CD8-positive, alpha-beta T cell (primary cell): ENCODE measurements at regions of chr1 and their contacts with region 1.

Region 1: DNA sequence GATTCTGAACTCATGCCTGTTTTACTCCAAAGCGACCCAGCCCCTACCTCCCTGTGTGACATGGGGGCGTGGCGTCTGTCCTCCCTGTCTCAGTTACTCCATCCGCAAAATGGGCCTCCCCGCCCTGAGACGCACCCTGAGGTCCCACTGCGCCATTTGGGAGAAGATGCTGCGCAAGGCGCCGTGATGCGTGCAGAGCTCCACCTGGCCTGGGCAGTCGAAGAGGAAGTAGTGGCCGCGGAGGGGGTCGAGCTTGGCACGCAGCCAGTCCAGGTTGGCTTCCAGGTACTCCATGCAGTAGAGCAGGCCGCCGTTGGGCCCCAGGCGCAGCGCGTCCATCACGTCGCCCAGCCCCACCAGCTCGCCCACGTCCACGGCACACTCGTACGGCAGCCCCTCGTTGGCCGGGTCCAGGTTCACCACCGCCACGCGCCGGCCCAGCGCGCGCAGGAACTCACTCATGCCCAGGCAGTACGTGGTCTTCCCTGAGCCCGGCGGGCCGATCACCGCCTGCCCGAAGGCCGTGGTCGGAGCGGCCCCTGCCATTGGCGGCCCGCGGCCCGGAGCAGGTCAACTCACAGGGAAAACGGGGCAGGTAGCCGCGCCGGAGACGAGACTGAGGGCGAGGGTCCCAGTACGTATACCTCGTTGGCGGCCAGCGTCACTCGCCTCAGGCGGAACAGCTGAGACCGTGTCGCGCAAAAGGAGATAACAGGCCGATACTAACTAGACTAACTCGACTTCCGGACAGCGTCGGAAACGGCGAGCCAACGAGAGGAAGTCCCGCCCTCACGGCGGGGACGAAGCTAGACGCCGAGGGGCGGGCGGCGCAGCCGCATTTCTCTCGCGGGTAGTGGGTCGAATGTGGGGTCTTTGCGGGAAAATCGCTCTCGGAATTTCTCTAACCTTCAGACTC is at the start of gene GPN2:
- DNase-seq: peak; percentile 44 to 90 (median 74)
- ATAC-seq: peak; percentile 92
- H3K4me3 ChIP-seq: peak within 1 kb of the TSS; percentile 57 to 94
- H3K4me3 Mint-ChIP-seq: peak within 1 kb of the TSS; percentile 94
- H3K27ac ChIP-seq: peak within 1 kb of the TSS; percentile 80 to 86
- H3K27ac Mint-ChIP-seq: peak within 1 kb of the TSS; percentile 96
- H3K4me1 ChIP-seq: peaks cover 18% of the 10 kb centered on the region
- H3K4me1 Mint-ChIP-seq: peaks cover 42% of the 10 kb centered on the region
- H3K27me3 ChIP-seq: no peaks in the 10 kb centered on the region
- H3K27me3 Mint-ChIP-seq: no peaks in the 10 kb centered on the region
- CTCF ChIP-seq: no peak
- total RNA-seq, gene GPN2: 35.1 to 37.4 TPM

Region 2: DNA sequence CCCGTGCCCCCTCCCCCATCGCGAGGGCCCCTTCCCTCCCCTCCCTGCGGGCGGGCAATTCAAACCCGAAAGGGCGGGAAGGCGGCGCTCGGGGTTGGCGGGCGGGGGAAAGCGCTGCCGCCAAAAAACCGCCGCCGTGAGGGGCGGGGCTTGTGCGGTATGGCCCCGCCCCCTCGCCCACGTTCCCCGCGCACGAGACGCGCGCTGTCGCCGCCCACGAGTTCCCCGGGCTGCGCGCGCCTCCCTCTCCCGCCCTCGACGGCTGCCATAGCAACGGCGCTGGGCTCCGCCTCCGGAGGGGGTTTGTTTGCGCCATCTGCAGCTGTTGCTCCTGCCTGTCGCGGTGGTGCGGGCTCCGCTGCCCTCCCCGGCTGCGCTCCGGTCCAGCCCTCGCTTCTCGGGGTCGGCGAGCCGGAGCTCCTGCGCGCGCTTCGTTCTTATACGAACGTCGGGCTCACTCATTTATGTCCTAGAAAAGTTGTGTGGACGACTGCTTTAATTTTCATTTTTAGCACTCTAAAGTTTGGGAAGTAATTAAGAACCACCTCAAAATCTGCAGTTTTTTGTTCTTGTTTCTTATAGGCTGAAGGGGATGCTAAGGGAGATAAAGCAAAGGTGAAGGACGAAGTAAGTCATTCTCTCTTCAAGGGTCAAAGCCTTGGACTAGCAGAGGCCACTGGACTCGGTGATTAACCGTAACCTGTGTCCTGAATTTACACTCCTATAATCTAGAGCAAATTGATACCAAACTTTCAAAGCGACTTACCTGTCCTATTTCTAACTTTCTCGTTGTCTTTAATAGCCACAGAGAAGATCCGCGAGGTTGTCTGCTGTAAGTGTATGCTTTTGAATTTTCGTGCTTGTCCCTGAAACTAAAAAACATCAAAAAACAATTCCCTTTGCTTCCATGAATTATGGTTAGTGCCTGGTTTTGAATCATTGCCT is 416.6 kb before region 1 on chr1:
- CTCF ChIA-PET with region 1: no interaction called
- POLR2A ChIA-PET with region 1: no interaction called
- intact Hi-C with region 1: loop called in 1 of 2 experiments (anchors 10 kb)
- DNase-seq: peak; percentile 94 to 99 (median 98)
- ATAC-seq: peak; percentile 86
- H3K4me3 ChIP-seq: peak overlapping the region; percentile 48 to 72
- H3K4me3 Mint-ChIP-seq: peak overlapping the region; percentile 85
- H3K27ac ChIP-seq: peak overlapping the region; percentile 93 to 94
- H3K27ac Mint-ChIP-seq: peak overlapping the region; percentile 78
- H3K4me1 ChIP-seq: peaks cover 32% of the 10 kb centered on the region
- H3K4me1 Mint-ChIP-seq: peaks cover 51% of the 10 kb centered on the region
- H3K27me3 ChIP-seq: no peaks in the 10 kb centered on the region
- H3K27me3 Mint-ChIP-seq: no peaks in the 10 kb centered on the region
- CTCF ChIP-seq: no peak

Region 3: DNA sequence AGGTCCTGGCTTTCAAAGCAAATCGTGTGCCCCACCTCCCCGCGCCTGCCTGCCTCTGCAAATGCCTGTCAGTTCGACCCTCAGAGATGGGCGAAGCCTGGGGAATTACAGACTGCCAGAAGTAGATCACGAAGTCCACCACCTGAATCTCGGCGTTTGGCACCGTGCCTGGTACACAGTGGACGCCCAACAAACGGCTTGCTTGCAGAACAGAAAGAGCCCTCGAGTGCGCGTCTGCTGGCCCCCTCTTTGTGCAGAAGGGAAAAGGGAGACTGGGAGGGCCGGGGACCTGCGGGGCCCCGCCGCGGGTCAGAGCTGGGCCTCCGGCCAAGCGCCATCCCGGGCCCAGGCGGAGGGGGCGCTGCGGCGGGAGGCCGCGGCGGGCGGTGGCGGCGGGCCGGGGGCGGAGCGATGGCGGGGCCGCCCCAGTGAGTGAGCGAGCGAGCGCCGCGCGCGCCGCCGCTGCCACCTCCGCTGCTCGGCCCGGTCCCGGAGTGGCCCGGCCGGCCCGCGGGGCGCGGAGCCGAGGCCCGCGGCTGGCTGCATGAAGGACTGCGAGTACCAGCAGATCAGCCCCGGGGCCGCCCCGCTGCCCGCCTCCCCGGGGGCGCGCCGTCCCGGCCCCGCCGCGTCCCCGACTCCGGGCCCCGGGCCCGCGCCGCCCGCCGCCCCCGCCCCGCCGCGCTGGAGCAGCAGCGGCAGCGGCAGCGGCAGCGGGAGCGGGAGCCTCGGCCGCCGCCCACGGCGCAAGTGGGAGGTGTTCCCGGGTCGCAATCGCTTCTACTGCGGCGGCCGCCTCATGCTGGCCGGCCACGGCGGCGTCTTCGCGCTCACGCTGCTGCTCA is 63.3 kb before region 1 on chr1 and contains the start of gene ZDHHC18:
- CTCF ChIA-PET with region 1: no interaction called
- POLR2A ChIA-PET with region 1: interaction called, 4 read pairs
- intact Hi-C with region 1: loop called (anchors 5 to 10 kb)
- DNase-seq: peak; percentile 48 to 86 (median 69)
- ATAC-seq: peak; percentile 89
- H3K4me3 ChIP-seq: peak within 1 kb of the TSS; percentile 68 to 91
- H3K4me3 Mint-ChIP-seq: peak within 1 kb of the TSS; percentile 94
- H3K27ac ChIP-seq: peak within 1 kb of the TSS; percentile 64 to 91
- H3K27ac Mint-ChIP-seq: peak within 1 kb of the TSS; percentile 96
- H3K4me1 ChIP-seq: peaks cover 50% of the 10 kb centered on the region
- H3K4me1 Mint-ChIP-seq: peaks cover 63% of the 10 kb centered on the region
- H3K27me3 ChIP-seq: no peaks in the 10 kb centered on the region
- H3K27me3 Mint-ChIP-seq: no peaks in the 10 kb centered on the region
- CTCF ChIP-seq: peak; percentile 50
- total RNA-seq, gene ZDHHC18: 55.2 to 55.4 TPM

Region 4: GRCh38 chr1:26833432-26834405 is 56.1 kb before region 1 on chr1:
- CTCF ChIA-PET with region 1: interaction called, 3 read pairs
- POLR2A ChIA-PET with region 1: interaction called, 6 read pairs
- intact Hi-C with region 1: loop called (anchors 5 to 10 kb)
- DNase-seq: peak; percentile 74 to 99 (median 89)
- ATAC-seq: peak; percentile 94
- H3K4me3 ChIP-seq: peak overlapping the region; percentile 27 to 31
- H3K4me3 Mint-ChIP-seq: peak overlapping the region; percentile 73
- H3K27ac ChIP-seq: peak overlapping the region; percentile 88 to 98
- H3K27ac Mint-ChIP-seq: peak overlapping the region; percentile 100
- H3K4me1 ChIP-seq: peaks cover 51% of the 10 kb centered on the region
- H3K4me1 Mint-ChIP-seq: peaks cover 74% of the 10 kb centered on the region
- H3K27me3 ChIP-seq: no peaks in the 10 kb centered on the region
- H3K27me3 Mint-ChIP-seq: no peaks in the 10 kb centered on the region
- CTCF ChIP-seq: peak; percentile 53

Region 5: GRCh38 chr1:26900001-26900814 is 10.4 kb after region 1 on chr1 and contains the start of gene GPATCH3:
- CTCF ChIA-PET with region 1: interaction called, 5 read pairs
- POLR2A ChIA-PET with region 1: interaction called, 44 read pairs
- intact Hi-C with region 1: loop called (anchors 1 kb)
- DNase-seq: peak; percentile 78 to 94 (median 88)
- ATAC-seq: peak; percentile 91
- H3K4me3 ChIP-seq: peak within 1 kb of the TSS; percentile 65 to 75
- H3K4me3 Mint-ChIP-seq: peak within 1 kb of the TSS; percentile 89
- H3K27ac ChIP-seq: peak within 1 kb of the TSS; percentile 70 to 85
- H3K27ac Mint-ChIP-seq: peak within 1 kb of the TSS; percentile 95
- H3K4me1 ChIP-seq: peaks cover 18% of the 10 kb centered on the region
- H3K4me1 Mint-ChIP-seq: peaks cover 27% of the 10 kb centered on the region
- H3K27me3 ChIP-seq: peaks cover 0 to 2% of the 10 kb centered on the region in 2 experiments
- H3K27me3 Mint-ChIP-seq: no peaks in the 10 kb centered on the region
- CTCF ChIP-seq: no peak
- total RNA-seq, gene GPATCH3: 47.8 to 47.9 TPM

Region 6: DNA sequence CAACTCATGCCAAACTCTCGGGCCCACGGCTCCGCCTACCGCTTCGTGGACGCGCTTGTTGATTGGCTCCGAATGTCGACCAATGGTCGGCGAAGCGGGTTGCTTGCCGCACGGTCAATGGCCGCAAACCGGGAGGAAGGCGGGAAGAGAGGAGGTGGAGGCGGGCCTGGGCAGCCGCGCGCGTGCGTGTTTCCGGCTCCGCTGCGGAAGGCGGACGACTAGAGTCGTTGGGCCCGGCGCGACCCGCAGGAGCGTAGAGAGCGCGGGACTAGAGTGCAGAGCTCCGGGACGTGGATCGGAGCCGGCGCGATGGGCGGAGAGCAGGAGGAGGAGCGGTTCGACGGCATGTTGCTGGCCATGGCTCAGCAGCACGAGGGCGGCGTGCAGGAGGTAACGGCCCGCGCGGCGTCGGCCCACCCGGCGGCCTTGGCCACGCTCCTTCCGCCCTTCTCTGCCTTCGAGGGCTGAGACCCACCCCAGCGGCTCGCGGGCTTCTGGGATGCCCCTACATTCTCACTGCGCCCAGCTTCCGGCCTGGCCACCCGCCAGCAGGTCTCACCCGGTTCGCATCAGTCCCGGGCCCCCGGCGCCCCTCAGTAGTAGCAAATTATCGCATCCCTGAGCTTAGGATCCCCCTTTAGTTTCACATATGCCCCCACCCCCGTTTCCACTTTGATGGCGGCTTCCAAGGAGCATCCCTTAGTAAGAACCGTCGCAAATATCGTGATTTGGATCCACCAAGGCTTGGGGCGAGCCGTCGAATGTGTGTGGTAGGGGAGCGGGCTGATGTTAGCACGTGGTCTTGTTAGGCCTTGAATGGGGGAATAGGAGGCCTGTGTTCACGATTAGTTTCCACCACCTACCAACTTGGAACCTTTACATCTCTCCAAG is 32.0 kb after region 1 on chr1 and contains the start of gene NUDC:
- CTCF ChIA-PET with region 1: no interaction called
- POLR2A ChIA-PET with region 1: interaction called, 10 read pairs
- intact Hi-C with region 1: loop called (anchors 1 to 2 kb)
- DNase-seq: peak; percentile 91 to 98 (median 94)
- ATAC-seq: peak; percentile 92
- H3K4me3 ChIP-seq: peak within 1 kb of the TSS; percentile 84 to 95
- H3K4me3 Mint-ChIP-seq: peak within 1 kb of the TSS; percentile 95
- H3K27ac ChIP-seq: peak within 1 kb of the TSS; percentile 87 to 90
- H3K27ac Mint-ChIP-seq: peak within 1 kb of the TSS; percentile 99
- H3K4me1 ChIP-seq: peaks cover 23% of the 10 kb centered on the region
- H3K4me1 Mint-ChIP-seq: peaks cover 34% of the 10 kb centered on the region
- H3K27me3 ChIP-seq: no peaks in the 10 kb centered on the region
- H3K27me3 Mint-ChIP-seq: no peaks in the 10 kb centered on the region
- CTCF ChIP-seq: no peak
- total RNA-seq, gene NUDC: 51.9 to 55.0 TPM

Region 7: DNA sequence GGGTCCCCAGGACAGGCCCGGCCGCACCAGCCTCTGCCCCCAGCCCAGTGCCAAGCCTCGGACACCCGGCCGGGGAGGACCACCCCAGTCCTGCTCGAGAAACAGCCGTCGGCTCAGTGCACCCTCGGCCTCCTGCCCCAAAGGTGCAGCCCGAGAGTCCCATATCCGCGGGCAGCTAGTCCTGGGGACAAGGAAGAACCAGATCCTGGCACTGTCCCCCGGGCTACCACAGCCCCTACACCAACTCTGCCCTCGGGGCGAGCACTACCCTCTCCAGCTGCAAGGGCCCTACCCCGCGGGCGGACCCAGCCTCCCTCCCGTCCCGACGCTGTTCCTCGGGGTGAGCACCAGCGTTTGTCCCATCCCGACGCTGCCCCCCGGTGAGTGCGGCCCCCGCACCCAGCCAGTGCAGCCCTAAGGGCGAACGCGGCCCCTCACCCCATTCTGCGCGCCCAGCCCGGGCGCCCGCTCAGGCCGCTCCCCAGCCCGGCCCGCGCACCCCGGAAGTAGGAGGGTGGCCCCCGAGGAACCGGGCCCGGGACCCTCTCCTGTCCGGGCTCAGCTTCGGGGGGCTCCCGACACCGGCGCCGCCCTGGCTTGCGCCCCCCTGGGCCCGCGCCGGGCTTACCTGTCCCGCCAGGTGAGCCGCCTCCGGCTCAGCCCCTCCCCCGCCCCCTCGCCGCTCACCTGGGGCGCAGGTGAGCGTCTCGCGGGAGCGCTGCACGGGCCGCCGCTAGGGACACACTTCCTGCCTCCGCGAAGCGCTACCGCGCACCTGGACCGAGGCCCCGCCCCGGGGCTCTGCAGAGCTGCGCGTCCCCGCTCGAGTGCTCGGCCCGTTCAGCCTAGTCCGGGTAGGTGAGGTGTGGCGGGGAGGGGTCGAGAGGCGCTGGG is 70.2 kb after region 1 on chr1 and contains the start of gene KDF1:
- CTCF ChIA-PET with region 1: no interaction called
- POLR2A ChIA-PET with region 1: no interaction called
- intact Hi-C with region 1: loop called in 1 of 2 experiments (anchors 2 kb)
- DNase-seq: peak; percentile 27 to 79 (median 69)
- ATAC-seq: peak; percentile 95
- H3K4me3 ChIP-seq: peak within 1 kb of the TSS; percentile 58 to 77
- H3K4me3 Mint-ChIP-seq: peak within 1 kb of the TSS; percentile 86
- H3K27ac ChIP-seq: no peak within 1 kb of the TSS
- H3K27ac Mint-ChIP-seq: no peak within 1 kb of the TSS
- H3K4me1 ChIP-seq: peaks cover 15% of the 10 kb centered on the region
- H3K4me1 Mint-ChIP-seq: peaks cover 9% of the 10 kb centered on the region
- H3K27me3 ChIP-seq: peaks cover 0 to 8% of the 10 kb centered on the region in 2 experiments
- H3K27me3 Mint-ChIP-seq: peaks cover 13% of the 10 kb centered on the region
- CTCF ChIP-seq: no peak
- total RNA-seq, gene KDF1: 0.92 to 1.3 TPM